ENCODE measurements at regions of chr1 and their contacts with region 1.

Region 1: GRCh38 chr1:41416552-41417334 is 55.5 kb downstream of the FOXO6 start:
- DNase-seq: peak; percentile 82 to 88 (median 85)
- H3K4me3 ChIP-seq: no peak overlapping the region
- H3K27ac ChIP-seq: no peak overlapping the region
- H3K4me1 ChIP-seq: no peaks in the 10 kb centered on the region
- H3K27me3 ChIP-seq: no peaks in the 10 kb centered on the region
- CTCF ChIP-seq: peak; percentile 98

Region 2: GRCh38 chr1:41274752-41275545 is 141.8 kb before region 1 on chr1:
- intact Hi-C with region 1: loop called (anchors 5 kb)
- DNase-seq: no peak
- H3K4me3 ChIP-seq: no peak overlapping the region
- H3K27ac ChIP-seq: no peak overlapping the region
- H3K4me1 ChIP-seq: peaks cover 0 to 6% (median 2%) of the 10 kb centered on the region in 3 donors
- H3K27me3 ChIP-seq: no peaks in the 10 kb centered on the region
- CTCF ChIP-seq: no peak

Region 3: GRCh38 chr1:41558761-41559171 is 142.0 kb after region 1 on chr1:
- intact Hi-C with region 1: no loop called
- DNase-seq: no peak
- H3K4me3 ChIP-seq: no peak overlapping the region
- H3K27ac ChIP-seq: no peak overlapping the region
- H3K4me1 ChIP-seq: no peaks in the 10 kb centered on the region
- H3K27me3 ChIP-seq: no peaks in the 10 kb centered on the region
- CTCF ChIP-seq: no peak